ENCODE measurements at regions of chr3 and their contacts with region 1.

Region 1: DNA sequence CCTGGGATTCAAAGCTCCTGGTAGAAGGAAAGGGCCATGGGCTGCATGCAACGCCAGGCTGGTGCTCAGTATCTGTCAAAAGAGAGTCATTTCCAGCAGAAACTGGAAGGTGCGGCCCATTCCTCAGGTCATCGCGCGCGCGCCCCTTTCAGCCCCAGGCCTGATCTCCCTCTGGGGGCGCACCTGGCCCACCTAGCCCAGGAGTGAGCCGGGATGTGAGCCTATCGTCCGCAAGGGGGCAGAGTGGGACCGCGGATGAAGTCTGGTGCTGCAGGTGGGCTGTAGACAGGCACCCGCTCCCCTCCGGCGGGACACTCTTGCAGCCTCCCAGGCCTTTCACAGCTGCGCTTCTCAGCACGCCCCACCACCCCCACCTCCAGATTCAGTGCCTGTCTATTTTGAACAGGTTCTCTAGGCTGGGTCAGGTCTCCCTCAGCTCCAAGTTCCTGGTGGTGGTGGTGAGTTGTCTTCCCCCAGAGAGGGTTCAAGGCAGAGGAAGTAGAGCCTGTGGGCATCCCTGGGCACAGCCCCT is 5.8 kb upstream of the RPL29 start:
- DNase-seq: peak; percentile 87 to 98
- H3K4me3 ChIP-seq: no peak overlapping the region
- H3K27ac ChIP-seq: no peak overlapping the region
- H3K4me1 ChIP-seq: peaks cover 11 to 46% (median 29%) of the 10 kb centered on the region in 4 experiments
- H3K27me3 ChIP-seq: no peaks in the 10 kb centered on the region; a peak in 2 of 7 replicates
- CTCF ChIP-seq: peak in 2 of 3 experiments; percentile 99 to 100; a peak in 3 of 4 replicates
- EP300 ChIP-seq: peak in 1 of 2 experiments; percentile 62; a peak in 1 of 3 replicates
- POLR2A ChIP-seq: no peak
- RAD21 ChIP-seq: peak; percentile 99

Region 2: GRCh38 chr3:52014613-52015012 is 13.1 kb after region 1 on chr3:
- CTCF ChIA-PET with region 1: interaction called, 171 read pairs
- POLR2A ChIA-PET with region 1: interaction called, 95 read pairs
- DNase-seq: peak in 1 of 2 experiments; percentile 71
- H3K4me3 ChIP-seq: no peak overlapping the region
- H3K27ac ChIP-seq: no peak overlapping the region
- H3K4me1 ChIP-seq: no peaks in the 10 kb centered on the region; a peak in 1 of 7 replicates
- H3K27me3 ChIP-seq: no peaks in the 10 kb centered on the region; a peak in 1 of 7 replicates
- CTCF ChIP-seq: peak in 2 of 3 experiments; percentile 70 to 86; a peak in 3 of 4 replicates
- EP300 ChIP-seq: no peak
- POLR2A ChIP-seq: no peak
- RAD21 ChIP-seq: peak; percentile 41 to 55

Region 3: DNA sequence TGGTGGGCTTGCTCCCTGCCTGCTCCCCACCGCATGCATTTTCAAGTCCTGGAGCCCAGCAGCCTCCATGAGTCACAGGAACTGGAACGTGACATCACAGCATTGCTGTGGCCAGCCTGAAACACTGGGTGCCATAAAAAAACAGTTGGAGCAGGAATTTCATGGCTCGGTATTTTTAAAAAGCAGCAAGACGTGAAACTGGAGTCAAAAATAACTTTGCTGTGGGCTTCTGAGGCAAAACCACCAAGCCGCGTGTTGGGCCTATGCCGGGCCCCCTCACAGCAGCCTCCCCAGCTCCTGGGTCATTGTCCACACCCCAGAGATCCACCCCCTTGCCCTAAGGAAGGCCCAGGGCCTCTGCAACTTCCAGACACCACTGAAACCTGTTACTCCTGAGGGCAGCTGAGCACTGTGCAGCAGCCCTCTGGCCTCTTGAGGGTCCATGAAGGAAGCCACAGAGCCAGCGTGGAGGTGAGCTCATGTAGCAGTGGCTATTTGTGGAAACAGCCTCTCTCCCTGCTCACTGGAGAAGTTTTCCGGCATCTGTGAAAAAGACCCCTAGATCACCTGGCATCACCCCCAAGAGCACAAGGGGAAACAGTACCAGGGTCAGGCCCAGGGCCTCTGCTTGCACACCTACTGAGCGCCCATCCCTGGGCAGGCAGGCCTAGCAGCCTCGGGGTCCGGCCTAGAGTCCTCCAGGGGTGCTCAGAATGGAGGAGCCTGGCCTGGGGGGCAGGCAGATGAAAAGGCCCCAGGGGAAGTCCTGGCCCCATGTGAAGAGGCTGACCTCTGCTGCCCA is 88.8 kb after region 1 on chr3:
- CTCF ChIA-PET with region 1: interaction called, 168 read pairs
- POLR2A ChIA-PET with region 1: interaction called, 5 read pairs
- DNase-seq: no peak
- H3K4me3 ChIP-seq: no peak overlapping the region
- H3K27ac ChIP-seq: no peak overlapping the region
- H3K4me1 ChIP-seq: peaks cover 0 to 2% (median 0%) of the 10 kb centered on the region in 4 experiments; a peak in 2 of 7 replicates
- H3K27me3 ChIP-seq: no peaks in the 10 kb centered on the region
- CTCF ChIP-seq: no peak
- EP300 ChIP-seq: no peak
- POLR2A ChIP-seq: no peak
- RAD21 ChIP-seq: no peak

Region 4: GRCh38 chr3:52108302-52109232 is 107.1 kb after region 1 on chr3:
- CTCF ChIA-PET with region 1: interaction called, 26 read pairs
- POLR2A ChIA-PET with region 1: interaction called, 3 read pairs
- DNase-seq: no peak
- H3K4me3 ChIP-seq: no peak overlapping the region
- H3K27ac ChIP-seq: no peak overlapping the region
- H3K4me1 ChIP-seq: no peaks in the 10 kb centered on the region
- H3K27me3 ChIP-seq: no peaks in the 10 kb centered on the region
- CTCF ChIP-seq: peak in 2 of 3 experiments; percentile 12 to 20; a peak in 1 of 4 replicates
- EP300 ChIP-seq: no peak
- POLR2A ChIP-seq: no peak
- RAD21 ChIP-seq: peak in 1 of 2 experiments; percentile 42; a peak in 3 of 4 replicates

Region 5: DNA sequence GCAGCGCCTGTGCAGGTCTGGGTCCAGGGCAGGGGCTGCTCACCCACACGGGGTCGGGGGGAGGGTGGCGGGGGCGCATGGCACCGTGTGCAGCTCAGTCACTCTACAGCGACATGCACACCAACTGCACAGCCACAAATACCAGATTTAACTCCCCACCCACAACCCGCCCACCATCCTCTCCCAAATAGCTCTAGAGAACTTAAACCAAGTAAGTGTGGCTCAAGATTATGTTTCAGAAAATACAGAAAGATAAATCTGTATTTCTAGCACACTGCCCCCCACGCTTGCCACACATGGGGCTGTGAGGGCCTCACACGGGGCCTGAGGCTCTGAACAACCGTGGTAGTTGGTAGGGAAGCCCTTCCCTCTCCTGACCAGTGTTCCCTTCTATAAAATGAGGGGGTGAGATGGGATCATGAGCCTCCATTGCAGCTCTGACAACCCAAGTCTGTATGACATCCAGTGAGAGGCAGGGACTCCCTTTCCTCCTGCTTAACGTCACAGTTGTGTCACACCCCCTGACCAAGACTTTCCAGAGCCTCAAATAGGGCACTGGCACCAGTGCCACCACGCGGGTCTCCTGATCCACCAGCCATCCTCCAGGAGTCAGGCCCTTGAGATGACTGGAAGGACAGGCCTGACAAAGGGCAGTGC is 129.6 kb after region 1 on chr3:
- CTCF ChIA-PET with region 1: interaction called, 17 read pairs
- POLR2A ChIA-PET with region 1: interaction called, 4 read pairs
- DNase-seq: no peak
- H3K4me3 ChIP-seq: no peak overlapping the region
- H3K27ac ChIP-seq: no peak overlapping the region
- H3K4me1 ChIP-seq: no peaks in the 10 kb centered on the region
- H3K27me3 ChIP-seq: no peaks in the 10 kb centered on the region
- CTCF ChIP-seq: no peak
- EP300 ChIP-seq: no peak
- POLR2A ChIP-seq: no peak
- RAD21 ChIP-seq: no peak

Region 6: DNA sequence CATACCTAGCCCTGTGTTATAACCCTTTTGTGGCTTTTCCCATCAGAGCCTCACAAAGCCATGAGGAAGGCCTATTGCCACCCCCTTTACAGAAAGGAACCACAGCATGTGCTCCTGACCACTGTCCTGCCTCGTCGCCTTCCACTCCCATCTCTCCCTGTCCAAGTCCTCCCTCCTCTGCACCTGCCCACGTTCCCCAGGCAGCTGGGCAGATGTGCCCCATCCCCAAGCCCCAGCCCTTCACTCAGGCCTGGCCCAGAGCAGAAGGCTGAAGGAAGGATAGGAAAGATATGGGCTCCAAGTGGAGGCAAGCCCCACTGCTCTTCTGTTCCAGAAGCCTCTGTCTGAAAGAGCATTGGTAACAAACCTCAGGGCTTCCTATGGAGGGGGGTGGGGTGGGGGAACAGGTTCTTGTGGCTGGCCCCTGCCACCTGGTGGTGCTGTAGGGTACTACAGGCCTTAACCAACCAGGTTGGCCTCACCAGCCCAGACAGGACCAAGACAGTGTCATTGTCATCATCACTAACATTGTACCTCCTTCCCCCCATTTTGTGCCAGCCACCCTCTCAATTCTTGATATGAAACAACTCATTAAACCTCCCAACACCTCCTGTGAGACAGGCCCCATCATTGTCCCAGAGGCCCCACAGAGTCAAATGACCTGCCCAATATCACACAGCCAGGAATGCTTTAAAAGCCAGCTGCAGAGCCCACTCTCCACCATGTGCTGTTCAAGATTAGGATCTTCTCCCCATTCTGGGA is 142.7 kb after region 1 on chr3:
- CTCF ChIA-PET with region 1: interaction called, 146 read pairs
- POLR2A ChIA-PET with region 1: interaction called, 4 read pairs
- DNase-seq: peak; percentile 54 to 92
- H3K4me3 ChIP-seq: no peak overlapping the region
- H3K27ac ChIP-seq: 0 out of 2 replicates have a peak overlapping the region, but pooled peaks have one; percentile 3
- H3K4me1 ChIP-seq: no peaks in the 10 kb centered on the region; a peak in 2 of 7 replicates
- H3K27me3 ChIP-seq: no peaks in the 10 kb centered on the region
- CTCF ChIP-seq: peak in 2 of 3 experiments; percentile 91 to 93; a peak in 3 of 4 replicates
- EP300 ChIP-seq: no peak
- POLR2A ChIP-seq: no peak
- RAD21 ChIP-seq: peak; percentile 82 to 86

Region 7: DNA sequence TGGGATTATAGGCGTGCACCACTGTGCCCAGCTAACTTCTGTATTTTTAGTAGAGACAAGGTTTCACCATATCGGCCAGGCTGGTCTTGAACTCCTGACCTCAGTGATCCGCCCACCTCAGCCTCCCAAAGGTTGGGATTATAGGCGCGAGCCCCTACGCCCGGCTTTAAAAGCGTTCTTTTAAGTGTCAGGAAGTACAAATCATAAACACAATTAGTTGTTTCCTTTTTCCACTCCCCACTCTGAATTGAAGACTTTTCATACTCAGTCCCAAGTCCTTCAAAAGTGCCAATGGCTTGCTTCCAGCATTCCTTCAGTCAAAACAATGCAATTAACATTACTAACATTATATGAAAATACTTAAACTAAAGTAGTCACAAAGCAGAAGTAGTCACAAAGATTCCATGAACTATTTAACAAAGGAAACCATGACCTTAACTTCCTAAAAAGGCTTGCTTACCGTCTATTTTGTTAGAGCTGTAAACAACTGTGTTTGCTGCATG is 268.8 kb after region 1 on chr3:
- CTCF ChIA-PET with region 1: no interaction called
- POLR2A ChIA-PET with region 1: no interaction called
- DNase-seq: no peak
- H3K4me3 ChIP-seq: no peak overlapping the region
- H3K27ac ChIP-seq: no peak overlapping the region
- H3K4me1 ChIP-seq: no peaks in the 10 kb centered on the region
- H3K27me3 ChIP-seq: no peaks in the 10 kb centered on the region
- CTCF ChIP-seq: no peak
- EP300 ChIP-seq: no peak
- POLR2A ChIP-seq: no peak
- RAD21 ChIP-seq: no peak